ENCODE measurements at regions of chr9 and their contacts with region 1.

Region 1: GRCh38 chr9:83544002-83544698 is 5.9 kb upstream of the FRMD3 start:
- DNase-seq: peak; percentile 68
- H3K4me3 ChIP-seq: no peak overlapping the region
- CTCF ChIP-seq: peak; percentile 71

Region 2: GRCh38 chr9:83219152-83219923 is 324.8 kb before region 1 on chr9:
- CTCF ChIA-PET with region 1: interaction called, 32 read pairs
- POLR2A ChIA-PET with region 1: no interaction called
- DNase-seq: peak; percentile 12
- H3K4me3 ChIP-seq: peak overlapping the region; percentile 62
- CTCF ChIP-seq: peak; percentile 77

Region 3: GRCh38 chr9:83312537-83312936 is 231.6 kb before region 1 on chr9:
- CTCF ChIA-PET with region 1: no interaction called
- POLR2A ChIA-PET with region 1: no interaction called
- DNase-seq: no peak
- H3K4me3 ChIP-seq: no peak overlapping the region
- CTCF ChIP-seq: no peak

Region 4: GRCh38 chr9:83327323-83327722 is 216.8 kb before region 1 on chr9:
- CTCF ChIA-PET with region 1: interaction called, 359 read pairs
- POLR2A ChIA-PET with region 1: no interaction called
- DNase-seq: no peak
- H3K4me3 ChIP-seq: no peak overlapping the region
- CTCF ChIP-seq: no peak

Region 5: DNA sequence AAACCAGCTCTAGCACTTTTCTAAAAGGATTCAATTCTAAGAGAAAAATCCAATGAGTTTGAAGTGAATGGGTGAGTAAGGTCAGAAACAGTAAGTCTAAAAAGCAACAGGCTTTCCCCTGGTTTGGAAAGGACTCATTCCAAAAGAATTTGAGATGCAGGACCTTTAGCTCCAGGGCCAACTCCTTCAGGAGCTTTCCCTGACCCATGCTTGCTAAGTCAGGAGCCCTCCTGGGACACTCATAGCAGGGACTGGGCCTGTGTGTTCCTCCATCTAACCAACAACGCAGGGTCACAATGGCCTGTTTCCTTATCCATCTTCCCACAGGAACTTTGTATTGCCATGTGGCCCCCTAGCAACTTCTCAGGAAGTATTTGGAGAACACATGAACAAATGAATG is 204.7 kb before region 1 on chr9:
- CTCF ChIA-PET with region 1: interaction called, 359 read pairs
- POLR2A ChIA-PET with region 1: no interaction called
- DNase-seq: no peak
- H3K4me3 ChIP-seq: no peak overlapping the region
- CTCF ChIP-seq: no peak

Region 6: GRCh38 chr9:83554278-83554677 is 10.1 kb after region 1 on chr9:
- CTCF ChIA-PET with region 1: interaction called, 13 read pairs
- POLR2A ChIA-PET with region 1: no interaction called
- DNase-seq: no peak
- H3K4me3 ChIP-seq: no peak overlapping the region
- CTCF ChIP-seq: no peak

Region 7: GRCh38 chr9:83563360-83563759 is 19.2 kb after region 1 on chr9:
- CTCF ChIA-PET with region 1: interaction called, 14 read pairs
- POLR2A ChIA-PET with region 1: no interaction called
- DNase-seq: no peak
- H3K4me3 ChIP-seq: no peak overlapping the region
- CTCF ChIP-seq: no peak